Activated CD8-positive, alpha-beta T cell treated with anti-CD3 and anti-CD28 coated beads for 36 hours (primary cell): ENCODE measurements at regions of chr1 and their contacts with region 1.

Region 1: GRCh38 chr1:43763497-43763973 is 56.2 kb downstream of the ST3GAL3 start:
- DNase-seq: peak; percentile 67
- ATAC-seq: peak; percentile 80
- H3K4me3 Mint-ChIP-seq: no peak overlapping the region
- H3K27ac Mint-ChIP-seq: no peak overlapping the region
- H3K4me1 Mint-ChIP-seq: no peaks in the 10 kb centered on the region
- H3K27me3 Mint-ChIP-seq: no peaks in the 10 kb centered on the region
- CTCF ChIP-seq: peak; percentile 81

Region 2: DNA sequence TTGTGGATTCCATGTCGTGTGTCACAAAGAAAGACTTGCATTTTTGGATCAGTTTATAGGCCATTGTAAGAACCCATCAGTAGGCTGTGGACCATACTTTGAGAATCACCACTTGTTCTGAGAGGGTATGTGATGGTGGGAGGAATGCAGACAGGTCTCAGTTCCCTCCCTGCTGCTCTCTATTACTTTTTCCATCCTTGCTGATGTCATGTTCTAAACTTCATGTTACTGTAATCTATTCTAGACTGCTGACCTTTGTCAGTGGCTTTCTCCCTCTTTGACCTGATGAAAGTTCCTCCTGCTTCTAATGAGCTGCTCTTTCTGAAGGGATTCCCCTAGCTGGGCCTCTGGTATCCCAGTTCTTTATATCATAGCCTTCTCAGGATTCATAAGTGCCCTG is 10.1 kb before region 1 on chr1:
- CTCF ChIA-PET with region 1: interaction called, 14 read pairs
- POLR2A ChIA-PET with region 1: no interaction called
- intact Hi-C with region 1: no loop called
- DNase-seq: no peak
- ATAC-seq: no peak
- H3K4me3 Mint-ChIP-seq: no peak overlapping the region
- H3K27ac Mint-ChIP-seq: no peak overlapping the region
- H3K4me1 Mint-ChIP-seq: peaks cover 6% of the 10 kb centered on the region
- H3K27me3 Mint-ChIP-seq: no peaks in the 10 kb centered on the region
- CTCF ChIP-seq: no peak

Region 3: DNA sequence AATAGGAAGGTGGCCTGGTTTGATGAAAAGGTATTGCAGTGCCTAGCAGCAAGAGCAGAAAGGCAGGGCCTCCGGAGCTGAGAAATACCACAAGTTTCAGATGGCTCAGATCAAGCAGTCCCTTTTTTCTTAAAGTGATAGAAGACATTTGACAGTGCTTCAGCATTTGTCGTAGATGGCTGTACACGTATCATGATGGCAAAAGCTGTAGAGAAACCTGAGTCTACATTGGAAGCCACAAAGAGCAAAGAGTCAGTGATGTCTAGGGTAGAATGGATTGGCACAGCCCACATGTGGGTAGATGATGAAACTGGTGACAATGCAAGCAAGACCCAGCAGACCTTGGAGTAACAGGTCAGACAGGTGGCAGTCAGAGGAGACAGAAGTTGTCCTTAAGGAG is 68.7 kb after region 1 on chr1:
- CTCF ChIA-PET with region 1: interaction called, 13 read pairs
- POLR2A ChIA-PET with region 1: no interaction called
- intact Hi-C with region 1: no loop called
- DNase-seq: peak; percentile 66
- ATAC-seq: peak; percentile 60
- H3K4me3 Mint-ChIP-seq: peak overlapping the region; percentile 32
- H3K27ac Mint-ChIP-seq: peak overlapping the region; percentile 82
- H3K4me1 Mint-ChIP-seq: peaks cover 70% of the 10 kb centered on the region
- H3K27me3 Mint-ChIP-seq: no peaks in the 10 kb centered on the region
- CTCF ChIP-seq: no peak

Region 4: GRCh38 chr1:43839056-43839455 is 75.5 kb after region 1 on chr1:
- CTCF ChIA-PET with region 1: interaction called, 12 read pairs
- POLR2A ChIA-PET with region 1: no interaction called
- intact Hi-C with region 1: no loop called
- DNase-seq: no peak
- ATAC-seq: no peak
- H3K4me3 Mint-ChIP-seq: no peak overlapping the region
- H3K27ac Mint-ChIP-seq: no peak overlapping the region
- H3K4me1 Mint-ChIP-seq: peaks cover 35% of the 10 kb centered on the region
- H3K27me3 Mint-ChIP-seq: no peaks in the 10 kb centered on the region
- CTCF ChIP-seq: no peak

Region 5: DNA sequence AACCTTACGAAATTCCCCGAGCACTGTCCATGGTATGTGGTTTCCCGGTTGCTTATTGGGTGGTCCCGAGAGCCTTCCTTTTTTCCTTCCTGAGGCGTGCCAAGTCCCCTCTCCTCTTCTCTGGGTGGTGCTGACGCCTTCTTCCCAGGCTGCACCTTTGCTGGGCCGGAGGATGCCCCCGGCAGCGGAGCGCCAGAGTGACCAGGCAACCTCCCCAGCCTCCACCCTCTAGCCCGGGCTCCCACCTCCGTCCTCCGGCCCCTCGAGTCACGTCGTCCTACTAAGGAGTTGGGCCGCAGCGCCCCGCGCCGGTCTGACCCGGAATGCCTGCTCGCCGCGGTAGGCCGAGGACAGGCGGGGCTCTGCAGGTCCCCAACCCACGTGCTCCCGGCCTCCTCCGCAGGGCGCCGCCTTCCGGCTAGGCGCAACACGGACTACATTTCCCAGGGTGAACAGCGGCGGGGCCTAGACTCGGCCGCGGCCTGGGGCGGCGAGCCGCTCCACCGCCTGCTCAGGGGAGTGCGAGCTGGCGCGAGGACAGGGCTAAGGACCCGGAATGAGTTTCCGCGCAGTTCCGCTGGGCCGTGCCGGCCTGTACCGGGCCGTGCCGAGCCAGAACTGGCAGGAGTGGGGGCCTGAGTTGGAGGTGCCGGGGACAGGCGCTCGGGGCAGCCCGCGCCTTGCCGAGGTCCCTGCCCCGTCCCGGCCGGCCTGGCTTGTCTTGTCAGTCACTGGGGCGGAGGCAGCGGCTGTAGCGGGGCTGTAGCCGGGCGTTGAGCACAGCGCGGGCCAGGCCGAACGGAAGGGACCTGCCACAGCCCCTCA is 182.9 kb after region 1 on chr1 and contains the start of gene IPO13:
- CTCF ChIA-PET with region 1: interaction called, 307 read pairs
- POLR2A ChIA-PET with region 1: no interaction called
- intact Hi-C with region 1: no loop called
- DNase-seq: peak; percentile 98
- ATAC-seq: peak; percentile 98
- H3K4me3 Mint-ChIP-seq: peak within 1 kb of the TSS; percentile 94
- H3K27ac Mint-ChIP-seq: peak within 1 kb of the TSS; percentile 90
- H3K4me1 Mint-ChIP-seq: peaks cover 38% of the 10 kb centered on the region
- H3K27me3 Mint-ChIP-seq: no peaks in the 10 kb centered on the region
- CTCF ChIP-seq: peak; percentile 71
- total RNA-seq, gene IPO13: 16.2 to 16.5 TPM

Region 6: DNA sequence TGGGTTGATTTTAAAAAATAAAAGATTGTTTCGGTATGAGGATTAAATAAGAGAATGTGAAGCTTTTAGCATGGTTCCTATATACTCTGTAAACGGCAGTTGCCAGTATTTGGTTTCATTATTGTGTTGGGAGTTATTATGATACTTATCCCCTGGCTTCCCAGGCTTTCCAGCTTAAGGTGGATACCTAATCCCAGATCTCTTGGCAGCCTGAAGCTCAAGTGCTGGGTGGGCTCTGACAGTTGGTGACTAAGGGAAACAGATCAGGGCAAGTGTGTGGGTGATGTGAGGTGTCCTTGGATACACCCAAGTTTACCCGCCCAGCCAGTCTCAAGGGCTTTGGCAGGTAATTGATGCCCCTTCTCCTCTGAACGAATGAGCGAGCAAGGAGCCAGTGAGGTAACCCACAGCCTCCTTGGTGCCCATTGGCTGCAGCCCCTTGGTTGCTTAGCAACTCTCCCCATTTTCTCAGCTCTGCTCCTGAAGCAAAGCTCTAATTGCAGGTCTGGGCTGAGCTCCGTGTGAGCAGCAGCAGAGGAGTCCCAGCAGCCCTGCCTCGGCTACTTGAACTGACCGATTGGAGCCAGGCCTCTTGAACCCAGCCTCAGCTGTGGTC is 189.3 kb after region 1 on chr1:
- CTCF ChIA-PET with region 1: interaction called, 10 read pairs
- POLR2A ChIA-PET with region 1: no interaction called
- intact Hi-C with region 1: no loop called
- DNase-seq: no peak
- ATAC-seq: no peak
- H3K4me3 Mint-ChIP-seq: no peak overlapping the region
- H3K27ac Mint-ChIP-seq: no peak overlapping the region
- H3K4me1 Mint-ChIP-seq: peaks cover 22% of the 10 kb centered on the region
- H3K27me3 Mint-ChIP-seq: no peaks in the 10 kb centered on the region
- CTCF ChIP-seq: no peak

Region 7: DNA sequence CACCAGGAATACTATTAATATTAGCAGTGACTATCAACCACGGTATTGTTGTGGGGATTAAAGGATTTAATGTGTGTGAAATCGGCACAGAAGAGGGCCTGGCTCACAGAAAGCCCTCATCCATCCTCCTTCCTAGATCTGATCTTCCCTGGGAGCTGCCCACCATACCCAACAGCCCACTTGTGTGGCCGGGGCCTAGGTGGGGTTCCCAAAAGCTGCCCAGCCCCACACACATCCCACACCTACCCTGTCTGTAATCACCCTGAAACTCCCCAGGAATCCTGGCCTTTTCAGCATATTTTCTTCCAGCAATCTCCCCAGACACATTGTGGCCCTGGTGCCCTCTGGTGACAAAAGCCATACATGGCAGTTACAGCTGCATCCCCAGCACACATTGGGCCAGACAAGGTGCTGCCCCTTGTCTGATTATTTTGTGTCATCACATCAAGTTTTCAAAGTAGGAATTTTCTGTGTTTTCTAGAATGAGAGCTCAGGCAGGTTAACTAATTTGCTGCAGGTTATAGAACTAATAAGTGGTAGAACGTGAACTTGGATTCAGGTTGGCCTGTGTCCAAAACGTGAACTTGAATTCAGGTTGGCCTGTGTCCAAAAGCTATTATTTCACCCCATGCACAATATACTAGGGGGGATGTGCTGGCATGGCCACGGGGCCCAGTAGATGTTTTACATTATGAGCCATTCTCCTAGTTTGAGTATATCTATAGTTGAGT is 273.0 kb after region 1 on chr1:
- CTCF ChIA-PET with region 1: interaction called, 16 read pairs
- POLR2A ChIA-PET with region 1: no interaction called
- intact Hi-C with region 1: no loop called
- DNase-seq: peak; percentile 81
- ATAC-seq: peak; percentile 93
- H3K4me3 Mint-ChIP-seq: no peak overlapping the region
- H3K27ac Mint-ChIP-seq: no peak overlapping the region
- H3K4me1 Mint-ChIP-seq: peaks cover 9% of the 10 kb centered on the region
- H3K27me3 Mint-ChIP-seq: no peaks in the 10 kb centered on the region
- CTCF ChIP-seq: peak; percentile 72